Caco-2 (cell line): ENCODE measurements at regions of chr7 and their contacts with region 1.

Region 1: DNA sequence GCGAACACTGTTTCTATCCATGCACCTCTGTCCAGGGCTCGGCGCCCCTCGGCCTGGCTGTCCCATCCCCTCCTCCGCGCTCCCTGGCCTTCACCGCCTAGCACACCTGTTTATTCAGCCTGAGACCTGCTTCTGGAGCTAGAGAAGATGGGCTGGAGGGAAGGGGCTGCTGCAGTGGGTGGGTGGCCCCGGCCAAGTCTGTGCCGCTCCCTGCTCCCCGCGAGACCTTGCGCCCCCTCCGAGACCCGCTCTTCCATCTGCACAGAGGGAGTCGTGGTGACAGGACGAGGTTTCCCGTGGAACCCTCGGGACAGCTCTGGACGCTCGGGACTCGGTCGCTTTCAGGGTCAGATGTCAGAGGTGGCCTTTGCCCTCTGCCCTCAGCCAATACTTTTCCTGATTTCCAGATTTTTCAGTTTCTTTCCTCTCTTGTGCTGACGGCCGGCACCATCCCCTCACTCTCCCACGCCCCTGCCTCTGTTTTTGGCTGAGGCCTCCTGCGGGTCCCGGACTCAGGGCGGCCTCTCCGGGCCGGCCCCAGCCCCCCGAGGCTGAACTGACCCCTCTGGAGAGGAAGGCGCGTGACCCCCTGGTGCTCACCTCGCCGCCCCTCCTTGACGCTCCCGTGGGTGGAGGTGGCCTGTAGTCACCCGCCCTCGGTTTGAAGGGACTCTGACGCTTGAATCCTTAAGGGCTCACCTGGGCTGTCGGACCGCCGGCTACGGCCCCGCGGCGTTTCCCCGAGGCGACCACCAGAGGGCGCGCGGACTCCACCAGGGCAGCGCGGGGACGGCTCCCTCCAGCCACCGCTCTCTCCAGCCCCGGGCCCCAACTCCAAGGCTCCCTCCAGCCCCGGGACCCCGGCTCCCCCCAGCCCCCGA is 15.6 kb downstream of the SHH start:
- DNase-seq: peak; percentile 65 to 86
- H3K4me3 ChIP-seq: no peak overlapping the region
- H3K4me3 Mint-ChIP-seq: no peak overlapping the region
- H3K27ac Mint-ChIP-seq: no peak overlapping the region
- H3K4me1 ChIP-seq: peaks cover 7% of the 10 kb centered on the region; the same call in 1 of the 2 replicates
- H3K4me1 Mint-ChIP-seq: no peaks in the 10 kb centered on the region
- H3K27me3 ChIP-seq: no peaks in the 10 kb centered on the region
- H3K27me3 Mint-ChIP-seq: no peaks in the 10 kb centered on the region
- CTCF ChIP-seq: peak; percentile 95 to 97

Region 2: GRCh38 chr7:155590215-155591018 is 206.2 kb before region 1 on chr7:
- CTCF ChIA-PET with region 1: no interaction called
- POLR2A ChIA-PET with region 1: no interaction called
- intact Hi-C with region 1: no loop called
- DNase-seq: peak in 1 of 2 experiments; percentile 27
- H3K4me3 ChIP-seq: no peak overlapping the region
- H3K4me3 Mint-ChIP-seq: no peak overlapping the region
- H3K27ac Mint-ChIP-seq: no peak overlapping the region
- H3K4me1 ChIP-seq: peaks cover 18% of the 10 kb centered on the region; the same call in 1 of the 2 replicates
- H3K4me1 Mint-ChIP-seq: peaks cover 5% of the 10 kb centered on the region
- H3K27me3 ChIP-seq: no peaks in the 10 kb centered on the region
- H3K27me3 Mint-ChIP-seq: no peaks in the 10 kb centered on the region
- CTCF ChIP-seq: no peak

Region 3: DNA sequence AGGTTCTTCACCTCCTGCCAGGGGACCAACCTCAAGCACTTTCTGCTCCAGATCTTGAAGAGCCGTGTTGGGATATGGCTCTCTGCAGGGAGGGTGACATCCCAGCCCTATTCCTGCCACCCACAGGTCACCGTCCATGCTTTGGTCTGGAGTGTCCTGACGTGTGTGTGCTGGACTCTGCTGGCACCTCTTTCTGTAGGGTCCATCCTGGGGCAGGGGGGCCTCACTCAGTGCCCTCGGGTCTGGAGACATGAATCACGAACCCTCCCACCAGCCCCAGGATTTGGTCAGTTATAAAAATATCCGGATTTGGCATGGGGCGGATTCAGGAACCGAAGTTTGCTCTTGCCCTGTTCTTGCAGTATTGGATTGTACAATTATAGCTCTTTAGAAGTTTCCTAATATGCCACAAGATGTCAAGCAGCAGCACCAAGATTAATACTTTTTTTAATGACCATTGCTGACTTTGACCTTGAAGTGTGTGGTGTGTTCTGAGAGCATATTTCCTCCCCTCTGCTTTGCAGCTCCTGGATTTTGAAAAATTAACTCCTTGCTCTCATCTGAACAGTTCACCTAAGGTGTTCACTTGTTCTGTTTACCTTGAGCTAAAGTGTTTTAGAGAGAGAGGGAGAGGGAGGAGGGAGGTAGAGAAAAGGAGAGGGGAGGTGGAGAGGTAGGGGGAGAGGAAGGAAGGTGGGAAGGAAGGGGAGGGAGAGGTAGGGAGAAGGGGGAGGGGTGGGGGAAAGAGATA is 111.0 kb after region 1 on chr7:
- CTCF ChIA-PET with region 1: no interaction called
- POLR2A ChIA-PET with region 1: no interaction called
- intact Hi-C with region 1: no loop called
- DNase-seq: no peak
- H3K4me3 ChIP-seq: no peak overlapping the region
- H3K4me3 Mint-ChIP-seq: no peak overlapping the region
- H3K27ac Mint-ChIP-seq: no peak overlapping the region
- H3K4me1 ChIP-seq: no peaks in the 10 kb centered on the region
- H3K4me1 Mint-ChIP-seq: no peaks in the 10 kb centered on the region
- H3K27me3 ChIP-seq: no peaks in the 10 kb centered on the region
- H3K27me3 Mint-ChIP-seq: peaks cover 3% of the 10 kb centered on the region
- CTCF ChIP-seq: no peak

Region 4: DNA sequence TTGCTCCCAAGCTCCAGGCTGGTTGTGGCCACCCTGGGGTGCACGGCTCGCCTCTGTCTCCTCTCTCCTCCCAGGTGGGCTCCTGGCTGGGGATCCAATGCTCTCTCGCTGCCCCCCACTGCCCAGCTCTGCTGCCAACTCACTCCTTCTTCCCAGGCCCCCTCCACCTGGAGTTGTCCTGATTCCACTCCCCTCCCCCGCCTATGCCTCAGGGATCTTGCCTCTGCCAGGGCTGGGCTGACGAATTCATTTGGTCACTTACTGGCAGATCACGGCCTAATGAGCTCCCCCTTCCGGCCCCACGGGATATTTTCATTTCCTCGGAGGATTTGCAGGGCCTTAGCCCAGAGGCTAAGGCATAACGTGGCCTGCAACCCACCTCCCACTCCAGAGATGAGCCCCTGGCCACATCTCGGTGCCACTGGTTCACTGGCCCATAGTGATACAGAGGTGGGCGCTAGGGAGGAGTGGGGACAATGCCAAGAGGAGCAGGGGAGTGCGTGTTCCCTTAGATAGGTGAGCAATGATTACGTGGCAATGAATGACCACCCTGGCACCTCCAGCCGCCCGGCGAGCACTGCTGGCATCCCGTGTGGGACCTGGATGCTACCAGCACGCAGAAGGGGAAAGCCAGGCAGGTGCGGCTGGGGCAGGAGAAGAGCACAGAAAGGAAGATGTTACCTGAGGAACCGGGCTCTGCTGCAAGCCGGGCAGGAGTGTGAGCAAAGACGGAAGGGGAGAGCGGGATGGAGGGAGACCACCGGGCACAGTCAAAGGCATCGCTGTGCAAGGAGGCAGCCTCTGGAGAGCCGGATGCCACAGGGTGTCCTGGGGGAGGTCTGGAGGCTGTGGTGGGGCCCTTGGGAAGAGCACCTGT is 360.4 kb after region 1 on chr7:
- CTCF ChIA-PET with region 1: no interaction called
- POLR2A ChIA-PET with region 1: no interaction called
- intact Hi-C with region 1: loop called (anchors 1 kb)
- DNase-seq: peak; percentile 42 to 57
- H3K4me3 ChIP-seq: no peak overlapping the region
- H3K4me3 Mint-ChIP-seq: no peak overlapping the region
- H3K27ac Mint-ChIP-seq: no peak overlapping the region
- H3K4me1 ChIP-seq: no peaks in the 10 kb centered on the region; the same call in 1 of the 2 replicates
- H3K4me1 Mint-ChIP-seq: peaks cover 6% of the 10 kb centered on the region
- H3K27me3 ChIP-seq: no peaks in the 10 kb centered on the region
- H3K27me3 Mint-ChIP-seq: no peaks in the 10 kb centered on the region
- CTCF ChIP-seq: peak in 1 of 2 experiments; percentile 36

Region 5: DNA sequence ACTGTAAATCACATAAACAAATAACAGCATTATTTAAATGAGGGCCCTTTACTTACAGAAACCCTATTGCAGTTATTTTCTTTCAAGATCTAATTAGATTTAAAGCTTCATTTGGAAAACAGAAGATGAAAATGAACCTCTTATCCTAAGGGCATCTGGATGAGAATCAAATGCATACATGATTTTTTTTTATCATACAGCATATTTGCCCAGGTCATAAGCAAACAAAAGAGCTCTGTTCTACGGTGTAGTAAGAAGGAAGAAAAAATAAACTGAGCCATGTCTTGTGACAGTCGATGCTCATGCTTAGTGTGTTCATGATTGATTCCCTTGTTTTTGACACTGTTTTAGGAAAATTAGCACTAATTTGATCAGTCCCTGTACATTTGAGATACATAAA is 641.4 kb after region 1 on chr7:
- CTCF ChIA-PET with region 1: no interaction called
- POLR2A ChIA-PET with region 1: no interaction called
- intact Hi-C with region 1: loop called (anchors 1 kb)
- DNase-seq: no peak
- H3K4me3 ChIP-seq: no peak overlapping the region
- H3K4me3 Mint-ChIP-seq: no peak overlapping the region
- H3K27ac Mint-ChIP-seq: no peak overlapping the region
- H3K4me1 ChIP-seq: no peaks in the 10 kb centered on the region
- H3K4me1 Mint-ChIP-seq: no peaks in the 10 kb centered on the region
- H3K27me3 ChIP-seq: no peaks in the 10 kb centered on the region
- H3K27me3 Mint-ChIP-seq: peaks cover 4% of the 10 kb centered on the region
- CTCF ChIP-seq: no peak

Region 6: DNA sequence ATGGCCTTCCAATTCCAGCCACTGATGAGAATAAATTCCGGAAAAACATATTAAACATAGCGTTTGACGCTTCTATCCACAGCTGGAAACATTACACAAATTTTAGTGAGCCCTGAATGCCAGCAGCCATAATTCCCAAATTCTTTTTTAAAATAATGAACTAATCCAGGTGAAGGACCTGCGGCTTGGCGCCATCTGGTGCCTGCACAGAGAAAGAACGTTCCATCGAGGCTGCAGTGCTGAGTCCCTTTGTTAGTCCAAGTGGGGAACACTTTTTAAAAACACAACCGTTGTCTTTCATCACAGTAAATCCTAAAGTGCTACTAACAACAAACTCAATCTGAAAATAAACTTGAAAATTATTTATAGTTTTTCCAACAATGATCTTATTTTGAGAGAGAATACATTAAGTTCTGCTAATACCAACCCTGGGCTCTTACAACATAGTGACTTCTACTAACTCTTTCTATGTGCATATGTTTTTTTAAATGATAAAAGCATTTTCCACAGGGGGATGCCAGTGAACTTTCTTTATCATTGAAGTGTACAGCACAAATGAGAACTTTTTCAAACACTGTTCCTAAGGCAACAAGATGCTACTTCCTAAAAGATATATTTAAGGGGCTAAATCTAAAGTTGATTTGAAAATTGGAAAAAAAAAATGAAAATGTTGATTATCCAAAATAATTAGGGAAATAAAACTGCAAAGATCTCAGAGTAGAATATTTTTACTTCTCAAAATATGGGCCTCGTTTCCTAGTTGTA is 677.0 kb after region 1 on chr7:
- CTCF ChIA-PET with region 1: no interaction called
- POLR2A ChIA-PET with region 1: no interaction called
- intact Hi-C with region 1: loop called (anchors 1 kb)
- DNase-seq: peak in 1 of 2 experiments; percentile 55
- H3K4me3 ChIP-seq: no peak overlapping the region
- H3K4me3 Mint-ChIP-seq: no peak overlapping the region
- H3K27ac Mint-ChIP-seq: no peak overlapping the region
- H3K4me1 ChIP-seq: peaks cover 3% of the 10 kb centered on the region; the same call in 1 of the 2 replicates
- H3K4me1 Mint-ChIP-seq: no peaks in the 10 kb centered on the region
- H3K27me3 ChIP-seq: no peaks in the 10 kb centered on the region
- H3K27me3 Mint-ChIP-seq: no peaks in the 10 kb centered on the region
- CTCF ChIP-seq: peak; percentile 83 to 88

Region 7: DNA sequence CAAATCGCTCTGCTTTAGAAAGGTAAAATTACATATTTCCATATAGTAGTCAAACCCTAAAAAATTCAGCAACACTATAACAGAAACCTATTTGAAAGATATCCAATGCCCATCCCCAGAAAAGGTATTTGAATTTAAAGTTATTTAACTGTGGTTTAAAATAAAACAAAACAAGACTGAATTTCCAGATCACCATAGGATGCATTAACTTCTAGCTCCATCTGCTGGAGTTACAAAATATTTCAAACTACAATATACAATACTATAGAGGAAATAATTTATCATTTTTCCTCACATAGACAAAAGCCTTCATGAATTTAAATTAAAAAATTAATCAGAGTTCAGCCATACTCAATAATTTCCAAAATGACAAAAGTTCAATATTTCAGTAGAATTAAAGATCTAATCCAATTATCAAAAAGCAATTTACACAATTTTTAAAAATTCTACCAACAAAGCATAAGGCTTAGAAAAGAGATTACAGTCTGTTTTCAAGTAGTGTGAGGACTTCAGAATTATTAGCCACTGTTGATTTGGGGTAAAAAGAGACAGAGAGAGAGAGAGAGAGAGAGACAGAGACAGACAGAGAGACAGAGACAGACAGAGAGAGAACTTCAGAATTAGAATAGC is 1020.4 kb after region 1 on chr7:
- CTCF ChIA-PET with region 1: no interaction called
- POLR2A ChIA-PET with region 1: no interaction called
- intact Hi-C with region 1: loop called (anchors 5 kb)
- DNase-seq: no peak
- H3K4me3 ChIP-seq: no peak overlapping the region
- H3K4me3 Mint-ChIP-seq: no peak overlapping the region
- H3K27ac Mint-ChIP-seq: no peak overlapping the region
- H3K4me1 ChIP-seq: peaks cover 13% of the 10 kb centered on the region
- H3K4me1 Mint-ChIP-seq: peaks cover 12% of the 10 kb centered on the region
- H3K27me3 ChIP-seq: no peaks in the 10 kb centered on the region
- H3K27me3 Mint-ChIP-seq: no peaks in the 10 kb centered on the region
- CTCF ChIP-seq: peak; percentile 41 to 53